CD4-positive, alpha-beta memory T cell (primary cell): ENCODE measurements at regions of chr6 and their contacts with region 1.

Region 1: DNA sequence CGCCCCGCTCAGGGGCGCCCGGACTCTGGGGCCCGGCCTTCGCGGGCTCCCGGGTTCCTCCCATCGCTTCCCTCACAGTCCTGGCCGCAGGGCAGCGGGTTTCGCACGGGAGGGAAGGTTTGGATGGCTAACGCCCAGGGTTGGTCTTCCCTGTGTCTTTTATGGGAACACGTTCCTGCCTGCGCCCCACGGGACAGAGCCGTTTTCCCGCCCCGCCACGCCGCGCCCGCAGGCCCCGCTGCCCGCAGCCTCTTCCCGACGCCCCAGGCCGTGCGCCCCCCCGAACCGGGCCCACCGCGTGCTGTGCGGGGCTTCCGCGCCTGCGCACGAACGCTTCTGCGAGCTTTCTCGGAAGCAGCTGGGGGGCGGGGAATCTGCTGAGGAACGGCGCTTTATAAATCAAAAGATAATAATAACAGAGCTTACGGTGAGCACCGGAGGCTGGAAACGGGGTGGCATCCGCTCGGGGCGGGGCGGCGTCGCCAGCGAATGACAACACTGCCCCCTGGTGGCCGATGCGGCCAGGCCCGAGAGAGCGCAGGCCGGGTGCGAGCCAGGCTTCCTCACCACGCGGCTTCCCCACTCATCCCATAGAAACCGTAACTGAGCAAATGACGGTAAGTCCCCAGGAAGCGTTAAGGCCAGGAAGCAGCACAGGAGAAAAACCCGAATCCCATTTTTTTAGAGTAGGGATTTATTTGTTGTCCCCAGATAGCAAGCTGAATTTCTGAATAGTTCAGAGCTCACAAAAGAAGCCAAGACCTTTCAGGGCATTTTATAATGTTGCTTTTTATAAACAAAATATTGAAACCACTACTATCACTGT is 116.4 kb downstream of the MYLK4 start:
- DNase-seq: peak; percentile 65 to 77 (median 75)
- H3K4me3 ChIP-seq: peak overlapping the region in 1 of 2 donors; percentile 49
- H3K4me3 Mint-ChIP-seq: peak overlapping the region; percentile 43 to 85 (median 67)
- H3K27ac ChIP-seq: no peak overlapping the region
- H3K27ac Mint-ChIP-seq: peak overlapping the region in 1 of 7 donors; percentile 30
- H3K4me1 ChIP-seq: no peaks in the 10 kb centered on the region
- H3K4me1 Mint-ChIP-seq: peaks cover 0 to 6% (median 4%) of the 10 kb centered on the region in 4 donors
- H3K27me3 ChIP-seq: no peaks in the 10 kb centered on the region
- H3K27me3 Mint-ChIP-seq: peaks cover 11 to 21% of the 10 kb centered on the region in 2 donors

Region 2: GRCh38 chr6:1604158-1605030 is 1030.0 kb before region 1 on chr6:
- CTCF ChIA-PET with region 1: interaction called, 216 read pairs
- POLR2A ChIA-PET with region 1: interaction called, 7 read pairs
- intact Hi-C with region 1: loop called (anchors 1 kb)
- DNase-seq: peak in 4 of 5 donors; percentile 60 to 71 (median 63)
- H3K4me3 ChIP-seq: no peak overlapping the region
- H3K4me3 Mint-ChIP-seq: peak overlapping the region in 1 of 8 donors; percentile 60
- H3K27ac ChIP-seq: no peak overlapping the region
- H3K27ac Mint-ChIP-seq: peak overlapping the region in 1 of 7 donors; percentile 42
- H3K4me1 ChIP-seq: peaks cover 44% of the 10 kb centered on the region
- H3K4me1 Mint-ChIP-seq: peaks cover 20 to 45% (median 28%) of the 10 kb centered on the region in 4 donors
- H3K27me3 ChIP-seq: peaks cover 71% of the 10 kb centered on the region
- H3K27me3 Mint-ChIP-seq: peaks cover 70% of the 10 kb centered on the region in 2 donors

Region 3: DNA sequence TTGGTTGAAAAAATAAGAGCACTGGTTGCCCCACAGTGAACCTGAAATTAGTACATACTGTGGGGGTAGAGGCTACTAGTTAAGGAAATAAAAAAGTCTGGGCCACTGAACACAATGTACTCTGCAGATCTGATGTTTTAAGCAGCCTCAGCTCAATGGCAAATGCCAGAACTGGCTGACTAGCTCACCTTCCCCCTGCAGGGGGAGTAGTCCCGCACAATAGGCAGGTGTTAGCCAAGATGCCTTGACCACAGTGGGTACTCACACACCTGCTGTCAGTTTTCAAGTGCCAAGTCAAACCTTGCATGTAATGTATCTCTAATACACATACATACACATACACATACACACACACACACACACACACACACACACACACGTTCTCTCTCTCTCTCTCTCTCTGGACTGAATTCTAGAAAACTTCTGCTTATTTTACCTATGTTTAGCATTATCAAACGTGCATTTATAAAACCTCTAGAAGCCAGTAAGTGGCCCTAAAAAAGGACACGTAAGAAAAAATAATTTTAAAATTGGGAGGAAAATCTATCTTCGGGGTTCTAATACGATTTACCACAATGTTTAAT is 425.0 kb before region 1 on chr6:
- CTCF ChIA-PET with region 1: interaction called, 11 read pairs
- POLR2A ChIA-PET with region 1: no interaction called
- intact Hi-C with region 1: no loop called
- DNase-seq: no peak
- H3K4me3 ChIP-seq: no peak overlapping the region
- H3K4me3 Mint-ChIP-seq: no peak overlapping the region
- H3K27ac ChIP-seq: no peak overlapping the region
- H3K27ac Mint-ChIP-seq: peak overlapping the region in 1 of 7 donors; percentile 21
- H3K4me1 ChIP-seq: no peaks in the 10 kb centered on the region
- H3K4me1 Mint-ChIP-seq: no peaks in the 10 kb centered on the region
- H3K27me3 ChIP-seq: no peaks in the 10 kb centered on the region
- H3K27me3 Mint-ChIP-seq: peaks cover 0 to 3% of the 10 kb centered on the region in 2 donors

Region 4: GRCh38 chr6:2448820-2449571 is 185.4 kb before region 1 on chr6:
- CTCF ChIA-PET with region 1: interaction called, 4 read pairs
- POLR2A ChIA-PET with region 1: no interaction called
- intact Hi-C with region 1: loop called (anchors 5 kb)
- DNase-seq: peak in 1 of 5 donors; percentile 8
- H3K4me3 ChIP-seq: no peak overlapping the region
- H3K4me3 Mint-ChIP-seq: peak overlapping the region in 6 of 8 donors; percentile 0 to 66 (median 44)
- H3K27ac ChIP-seq: no peak overlapping the region
- H3K27ac Mint-ChIP-seq: peak overlapping the region in 1 of 7 donors; percentile 30
- H3K4me1 ChIP-seq: no peaks in the 10 kb centered on the region
- H3K4me1 Mint-ChIP-seq: peaks cover 0 to 5% (median 4%) of the 10 kb centered on the region in 4 donors
- H3K27me3 ChIP-seq: no peaks in the 10 kb centered on the region
- H3K27me3 Mint-ChIP-seq: peaks cover 1 to 2% of the 10 kb centered on the region in 2 donors

Region 5: DNA sequence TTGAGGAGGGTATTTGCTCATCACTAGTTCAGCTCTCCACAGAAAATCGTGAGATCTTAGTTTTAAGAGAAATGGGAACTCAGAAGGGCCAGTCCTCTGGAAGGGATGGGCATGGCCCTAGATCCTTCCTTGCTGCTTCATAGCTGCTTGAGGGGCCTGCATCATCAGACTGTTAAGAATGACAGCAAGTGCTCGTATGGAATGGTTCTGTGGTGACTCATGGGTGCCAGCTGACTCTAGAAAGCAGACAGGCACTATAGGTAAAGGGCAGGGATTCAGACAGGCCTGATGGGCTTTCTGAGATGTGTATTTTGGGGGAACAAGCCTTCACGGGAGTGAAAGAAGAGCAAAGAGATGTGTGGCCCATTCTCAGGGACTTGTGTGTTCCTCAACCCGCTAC is 25.5 kb after region 1 on chr6:
- CTCF ChIA-PET with region 1: interaction called, 10 read pairs
- POLR2A ChIA-PET with region 1: no interaction called
- intact Hi-C with region 1: no loop called
- DNase-seq: no peak
- H3K4me3 ChIP-seq: no peak overlapping the region
- H3K4me3 Mint-ChIP-seq: no peak overlapping the region
- H3K27ac ChIP-seq: no peak overlapping the region
- H3K27ac Mint-ChIP-seq: no peak overlapping the region
- H3K4me1 ChIP-seq: no peaks in the 10 kb centered on the region
- H3K4me1 Mint-ChIP-seq: no peaks in the 10 kb centered on the region
- H3K27me3 ChIP-seq: no peaks in the 10 kb centered on the region
- H3K27me3 Mint-ChIP-seq: peaks cover 4 to 7% of the 10 kb centered on the region in 2 donors